ENCODE measurements at regions of chr10 and their contacts with region 1.

Region 1: DNA sequence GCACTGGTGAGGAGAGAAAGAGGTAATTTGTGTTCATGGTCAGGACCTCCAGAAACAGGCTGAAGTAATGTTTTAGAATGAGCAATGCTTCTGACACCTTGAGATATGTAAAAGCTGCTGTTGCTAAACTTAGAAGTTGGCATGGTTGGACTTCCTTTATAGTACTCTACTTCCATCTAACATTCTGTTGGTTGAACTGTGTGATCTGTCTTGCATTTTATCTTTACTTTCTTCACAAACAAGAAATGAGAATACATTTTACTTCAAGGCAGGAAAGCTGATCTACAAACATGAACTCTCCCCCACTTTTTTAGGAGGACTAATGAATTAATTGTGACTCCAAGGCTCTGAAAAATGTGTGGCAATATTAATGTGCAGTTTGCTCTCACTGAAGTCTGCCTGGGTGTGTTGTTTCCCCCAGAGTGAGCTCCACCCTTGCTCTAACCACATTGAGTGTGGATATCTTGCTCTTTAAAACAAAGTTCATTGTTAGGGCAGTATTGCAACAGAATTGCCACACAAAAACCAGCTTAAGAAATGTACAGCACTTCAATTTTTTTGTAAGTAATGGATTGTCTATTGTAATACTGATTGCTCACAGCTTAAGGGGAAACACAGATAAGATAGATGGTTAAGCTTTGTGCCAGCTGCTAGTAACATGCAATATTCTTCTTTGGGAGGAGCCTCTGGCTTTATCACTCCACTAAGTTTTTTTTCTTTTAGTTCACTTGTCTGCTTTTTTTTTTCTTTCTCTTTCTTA is 69.0 kb downstream of the ADD3 start:
- DNase-seq: peak in 7 of 9 donors; percentile 47 to 74 (median 60)
- ATAC-seq: peak; percentile 85
- H3K4me3 ChIP-seq: peak overlapping the region; percentile 21
- H3K4me3 Mint-ChIP-seq: peak overlapping the region; percentile 73 to 92 (median 86)
- H3K27ac ChIP-seq: peak overlapping the region; percentile 56
- H3K27ac Mint-ChIP-seq: peak overlapping the region; percentile 79 to 97 (median 94)
- H3K4me1 ChIP-seq: peaks cover 69 to 84% of the 10 kb centered on the region in 2 donors
- H3K4me1 Mint-ChIP-seq: peaks cover 64 to 97% (median 87%) of the 10 kb centered on the region in 7 donors
- H3K27me3 ChIP-seq: no peaks in the 10 kb centered on the region
- H3K27me3 Mint-ChIP-seq: no peaks in the 10 kb centered on the region

Region 2: DNA sequence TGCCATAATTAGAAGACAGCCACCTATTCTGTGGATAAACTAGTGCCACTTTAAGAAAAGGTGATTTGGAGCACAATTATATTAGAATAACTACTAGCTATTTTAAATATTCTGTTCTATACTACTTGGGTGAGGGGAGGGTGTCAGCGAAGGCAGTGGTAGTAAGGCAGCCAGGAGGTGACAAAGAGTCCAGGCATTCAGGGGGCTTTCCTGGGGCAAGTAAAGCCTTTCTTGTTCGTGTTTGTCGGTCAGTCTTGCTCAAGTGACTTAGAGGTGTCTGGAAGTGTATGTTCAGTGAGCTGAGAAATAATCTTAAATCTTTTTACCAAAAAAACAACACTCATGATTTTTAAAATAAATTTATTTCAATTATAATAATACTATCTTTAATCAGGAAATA is 34.6 kb before region 1 on chr10:
- CTCF ChIA-PET with region 1: no interaction called
- POLR2A ChIA-PET with region 1: interaction called, 4 read pairs
- intact Hi-C with region 1: loop called in 1 of 2 experiments (anchors 5 kb)
- DNase-seq: no peak
- ATAC-seq: no peak
- H3K4me3 ChIP-seq: no peak overlapping the region
- H3K4me3 Mint-ChIP-seq: peak overlapping the region in 3 of 10 donors; percentile 19 to 54 (median 20)
- H3K27ac ChIP-seq: no peak overlapping the region
- H3K27ac Mint-ChIP-seq: peak overlapping the region in 6 of 9 donors; percentile 46 to 91 (median 57)
- H3K4me1 ChIP-seq: peaks cover 9 to 36% of the 10 kb centered on the region in 2 donors
- H3K4me1 Mint-ChIP-seq: peaks cover 41 to 88% (median 75%) of the 10 kb centered on the region in 7 donors
- H3K27me3 ChIP-seq: no peaks in the 10 kb centered on the region
- H3K27me3 Mint-ChIP-seq: no peaks in the 10 kb centered on the region

Region 3: GRCh38 chr10:110059925-110060324 is 16.8 kb before region 1 on chr10:
- CTCF ChIA-PET with region 1: interaction called, 3 read pairs
- POLR2A ChIA-PET with region 1: interaction called, 9 read pairs
- intact Hi-C with region 1: loop called (anchors 2 kb)
- DNase-seq: peak in 1 of 9 donors; percentile 23
- ATAC-seq: peak; percentile 42
- H3K4me3 ChIP-seq: no peak overlapping the region
- H3K4me3 Mint-ChIP-seq: peak overlapping the region; percentile 18 to 84 (median 56)
- H3K27ac ChIP-seq: no peak overlapping the region
- H3K27ac Mint-ChIP-seq: peak overlapping the region; percentile 35 to 93 (median 78)
- H3K4me1 ChIP-seq: peaks cover 41 to 73% of the 10 kb centered on the region in 2 donors
- H3K4me1 Mint-ChIP-seq: peaks cover 67 to 96% (median 86%) of the 10 kb centered on the region in 7 donors
- H3K27me3 ChIP-seq: no peaks in the 10 kb centered on the region
- H3K27me3 Mint-ChIP-seq: no peaks in the 10 kb centered on the region

Region 4: GRCh38 chr10:110088367-110089104 is 11.8 kb after region 1 on chr10:
- CTCF ChIA-PET with region 1: interaction called, 5 read pairs
- POLR2A ChIA-PET with region 1: interaction called, 9 read pairs
- intact Hi-C with region 1: loop called in 1 of 2 experiments (anchors 1 kb)
- DNase-seq: no peak
- ATAC-seq: no peak
- H3K4me3 ChIP-seq: no peak overlapping the region
- H3K4me3 Mint-ChIP-seq: peak overlapping the region in 5 of 10 donors; percentile 29 to 45 (median 38)
- H3K27ac ChIP-seq: no peak overlapping the region
- H3K27ac Mint-ChIP-seq: peak overlapping the region in 5 of 9 donors; percentile 35 to 65 (median 56)
- H3K4me1 ChIP-seq: peaks cover 32 to 35% of the 10 kb centered on the region in 2 donors
- H3K4me1 Mint-ChIP-seq: peaks cover 43 to 96% (median 82%) of the 10 kb centered on the region in 7 donors
- H3K27me3 ChIP-seq: no peaks in the 10 kb centered on the region
- H3K27me3 Mint-ChIP-seq: no peaks in the 10 kb centered on the region

Region 5: DNA sequence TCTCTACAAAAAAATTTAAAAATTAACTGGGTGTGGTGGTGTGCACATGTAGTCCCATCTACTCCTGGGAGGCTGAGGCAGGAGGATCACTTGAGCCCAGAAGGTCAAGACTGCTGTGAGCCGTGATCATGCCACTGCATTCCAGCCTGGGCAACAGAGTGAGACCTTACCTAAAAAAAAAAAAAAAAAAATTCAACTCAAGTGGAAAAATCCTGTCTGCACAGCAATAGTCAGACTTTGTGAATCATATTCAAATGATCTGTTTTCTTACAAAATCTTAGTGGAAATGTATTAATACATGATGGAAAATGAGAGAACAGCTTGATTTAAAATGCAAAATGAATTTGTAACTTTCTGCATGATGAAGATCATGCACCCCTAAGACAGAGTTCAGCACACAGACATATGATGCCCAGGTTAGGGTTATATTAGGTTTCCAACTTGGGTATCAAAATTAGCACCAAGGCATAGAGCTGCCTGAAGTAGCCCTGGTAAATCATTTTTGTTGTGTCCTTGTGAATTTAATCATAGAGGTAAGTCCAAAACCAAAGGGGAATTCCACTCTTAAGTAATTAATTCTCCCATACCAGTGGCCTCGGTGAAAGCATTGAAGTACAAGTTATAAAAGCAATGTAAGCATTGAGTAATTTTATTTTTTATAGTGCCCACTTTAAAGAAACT is 24.9 kb after region 1 on chr10:
- CTCF ChIA-PET with region 1: interaction called, 3 read pairs
- POLR2A ChIA-PET with region 1: interaction called, 7 read pairs
- intact Hi-C with region 1: loop called in 1 of 2 experiments (anchors 1 kb)
- DNase-seq: no peak
- ATAC-seq: no peak
- H3K4me3 ChIP-seq: no peak overlapping the region
- H3K4me3 Mint-ChIP-seq: no peak overlapping the region
- H3K27ac ChIP-seq: no peak overlapping the region
- H3K27ac Mint-ChIP-seq: peak overlapping the region in 5 of 9 donors; percentile 12 to 84 (median 78)
- H3K4me1 ChIP-seq: peaks cover 0 to 8% of the 10 kb centered on the region in 2 donors
- H3K4me1 Mint-ChIP-seq: peaks cover 28 to 85% (median 68%) of the 10 kb centered on the region in 7 donors
- H3K27me3 ChIP-seq: no peaks in the 10 kb centered on the region
- H3K27me3 Mint-ChIP-seq: no peaks in the 10 kb centered on the region

Measured in naive thymus-derived CD4-positive, alpha-beta T cell (primary cell).